ENCODE measurements at regions of chr7 and their contacts with region 1.

Region 1: DNA sequence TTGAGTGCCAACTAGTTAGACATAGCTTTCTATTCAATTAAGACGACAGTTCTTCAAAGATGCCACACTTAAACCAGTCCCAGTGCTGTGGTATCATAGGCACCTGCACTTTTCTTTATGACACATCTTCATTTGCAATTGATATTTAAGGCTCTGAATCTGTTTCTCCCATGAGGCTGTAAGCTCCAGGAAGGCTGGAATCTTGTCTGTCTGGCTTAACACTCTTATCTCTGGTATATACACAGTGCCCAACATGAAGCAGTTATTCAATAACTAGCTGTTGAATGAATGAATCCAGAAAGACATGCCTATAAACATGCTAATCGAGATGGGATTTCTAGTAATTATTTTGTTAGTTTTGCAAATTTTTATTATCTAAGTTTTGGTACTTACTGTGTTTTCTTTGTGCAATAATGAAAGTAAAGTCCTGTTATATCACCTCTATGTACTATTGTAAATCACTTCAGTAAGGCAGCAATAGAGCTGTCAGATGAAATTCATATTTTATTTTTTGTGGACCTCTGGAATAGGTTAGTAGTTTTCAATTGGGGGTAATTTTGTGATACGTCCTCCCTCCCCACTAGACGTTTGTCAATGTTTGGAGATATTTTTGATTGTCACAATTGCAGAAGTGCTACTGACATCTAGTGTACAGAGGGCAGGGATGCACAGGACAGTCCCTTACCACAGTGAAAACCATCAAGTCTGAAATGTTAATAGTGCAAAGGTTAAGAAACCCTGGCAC is 51.3 kb upstream of the STEAP4 start:
- DNase-seq: no peak
- H3K4me3 Mint-ChIP-seq: no peak overlapping the region
- H3K27ac Mint-ChIP-seq: no peak overlapping the region
- H3K4me1 Mint-ChIP-seq: no peaks in the 10 kb centered on the region
- H3K27me3 Mint-ChIP-seq: peaks cover 9% of the 10 kb centered on the region

Region 2: GRCh38 chr7:88243345-88243909 is 114.5 kb before region 1 on chr7:
- CTCF ChIA-PET with region 1: interaction called, 7 read pairs
- intact Hi-C with region 1: loop called (anchors 1 kb)
- DNase-seq: no peak
- H3K4me3 Mint-ChIP-seq: no peak overlapping the region
- H3K27ac Mint-ChIP-seq: no peak overlapping the region
- H3K4me1 Mint-ChIP-seq: no peaks in the 10 kb centered on the region
- H3K27me3 Mint-ChIP-seq: peaks cover 16% of the 10 kb centered on the region

Region 3: GRCh38 chr7:88328787-88329186 is 29.2 kb before region 1 on chr7:
- CTCF ChIA-PET with region 1: no interaction called
- intact Hi-C with region 1: no loop called
- DNase-seq: no peak
- H3K4me3 Mint-ChIP-seq: no peak overlapping the region
- H3K27ac Mint-ChIP-seq: no peak overlapping the region
- H3K4me1 Mint-ChIP-seq: peaks cover 1% of the 10 kb centered on the region
- H3K27me3 Mint-ChIP-seq: peaks cover 4% of the 10 kb centered on the region

Region 4: DNA sequence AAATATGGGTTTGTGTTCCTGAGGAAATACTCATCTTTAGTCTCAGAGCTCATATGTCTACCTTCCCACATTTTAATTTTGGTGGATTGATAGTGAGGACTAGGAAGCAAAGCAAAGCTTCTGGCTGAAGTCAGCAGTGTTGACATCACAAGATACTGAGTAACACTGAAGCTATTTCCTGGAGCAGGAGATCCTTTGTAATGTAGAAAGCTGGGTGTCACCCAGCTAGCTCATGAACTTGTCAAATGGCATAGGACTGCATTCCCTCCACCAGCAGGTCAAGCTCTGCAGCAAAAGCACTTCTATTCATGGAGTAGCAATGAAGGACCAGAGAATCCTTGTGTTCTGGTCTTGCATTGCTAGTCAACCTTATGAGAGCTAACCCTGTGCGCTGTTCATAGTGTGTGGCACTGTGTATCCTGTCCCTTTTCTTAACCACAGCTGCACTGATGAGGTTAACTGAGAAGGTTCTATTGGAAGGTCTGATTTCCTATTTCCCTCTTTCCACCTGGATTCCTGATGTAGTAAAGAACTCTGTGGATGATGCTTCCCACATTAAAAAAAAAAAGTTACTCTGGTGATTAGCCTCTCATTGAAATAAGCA is 306.8 kb after region 1 on chr7:
- CTCF ChIA-PET with region 1: no interaction called
- intact Hi-C with region 1: no loop called
- DNase-seq: no peak
- H3K4me3 Mint-ChIP-seq: no peak overlapping the region
- H3K27ac Mint-ChIP-seq: no peak overlapping the region
- H3K4me1 Mint-ChIP-seq: no peaks in the 10 kb centered on the region
- H3K27me3 Mint-ChIP-seq: no peaks in the 10 kb centered on the region

Measured in activated naive CD4-positive, alpha-beta T cell treated with anti-CD3 and anti-CD28 coated beads for 36 hours (primary cell).